Activated B cell treated with CpG ODN at 0.5 μM for 24 hours (primary cell): ENCODE measurements at regions of chr1 and their contacts with region 1.

Region 1: GRCh38 chr1:226736908-226737818 is 1.9 kb downstream of the ITPKB start:
- DNase-seq: peak; percentile 51
- ATAC-seq: peak; percentile 44
- H3K4me3 Mint-ChIP-seq: peak overlapping the region; percentile 93
- H3K27ac Mint-ChIP-seq: peak overlapping the region; percentile 86
- H3K4me1 Mint-ChIP-seq: peaks cover 68% of the 10 kb centered on the region
- H3K27me3 Mint-ChIP-seq: no peaks in the 10 kb centered on the region
- CTCF ChIP-seq: no peak

Region 2: DNA sequence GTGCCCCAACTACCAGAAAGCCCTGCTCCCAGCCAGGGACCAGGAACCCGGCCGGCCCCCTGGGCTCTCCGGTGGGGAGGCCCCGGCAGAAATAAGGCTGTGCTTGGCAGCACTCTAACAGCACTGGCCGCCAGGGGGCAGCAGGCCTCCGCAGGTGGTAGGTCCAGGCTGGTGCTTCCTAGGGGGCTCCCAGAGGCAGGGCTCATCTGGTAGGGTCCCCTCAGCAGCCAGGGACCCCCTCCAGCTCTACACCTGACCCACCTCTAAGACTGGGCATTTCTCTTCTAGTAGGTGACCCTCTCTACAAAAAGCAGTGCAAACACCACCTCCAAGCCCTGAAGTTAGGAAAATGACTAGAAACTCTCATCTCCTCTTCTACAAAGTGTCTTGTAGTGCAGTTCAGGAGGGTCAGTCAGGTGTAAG is 103.0 kb before region 1 on chr1:
- CTCF ChIA-PET with region 1: interaction called, 3 read pairs
- POLR2A ChIA-PET with region 1: interaction called, 10 read pairs
- intact Hi-C with region 1: loop called (anchors 1 kb)
- DNase-seq: peak; percentile 81
- ATAC-seq: peak; percentile 72
- H3K4me3 Mint-ChIP-seq: no peak overlapping the region
- H3K27ac Mint-ChIP-seq: peak overlapping the region; percentile 60
- H3K4me1 Mint-ChIP-seq: peaks cover 72% of the 10 kb centered on the region
- H3K27me3 Mint-ChIP-seq: no peaks in the 10 kb centered on the region
- CTCF ChIP-seq: peak; percentile 56

Region 3: GRCh38 chr1:226662642-226663326 is 74.4 kb before region 1 on chr1:
- CTCF ChIA-PET with region 1: interaction called, 3 read pairs
- POLR2A ChIA-PET with region 1: interaction called, 95 read pairs
- intact Hi-C with region 1: loop called (anchors 1 kb)
- DNase-seq: peak; percentile 73
- ATAC-seq: peak; percentile 84
- H3K4me3 Mint-ChIP-seq: peak overlapping the region; percentile 56
- H3K27ac Mint-ChIP-seq: peak overlapping the region; percentile 92
- H3K4me1 Mint-ChIP-seq: peaks cover 89% of the 10 kb centered on the region
- H3K27me3 Mint-ChIP-seq: no peaks in the 10 kb centered on the region
- CTCF ChIP-seq: no peak

Region 4: DNA sequence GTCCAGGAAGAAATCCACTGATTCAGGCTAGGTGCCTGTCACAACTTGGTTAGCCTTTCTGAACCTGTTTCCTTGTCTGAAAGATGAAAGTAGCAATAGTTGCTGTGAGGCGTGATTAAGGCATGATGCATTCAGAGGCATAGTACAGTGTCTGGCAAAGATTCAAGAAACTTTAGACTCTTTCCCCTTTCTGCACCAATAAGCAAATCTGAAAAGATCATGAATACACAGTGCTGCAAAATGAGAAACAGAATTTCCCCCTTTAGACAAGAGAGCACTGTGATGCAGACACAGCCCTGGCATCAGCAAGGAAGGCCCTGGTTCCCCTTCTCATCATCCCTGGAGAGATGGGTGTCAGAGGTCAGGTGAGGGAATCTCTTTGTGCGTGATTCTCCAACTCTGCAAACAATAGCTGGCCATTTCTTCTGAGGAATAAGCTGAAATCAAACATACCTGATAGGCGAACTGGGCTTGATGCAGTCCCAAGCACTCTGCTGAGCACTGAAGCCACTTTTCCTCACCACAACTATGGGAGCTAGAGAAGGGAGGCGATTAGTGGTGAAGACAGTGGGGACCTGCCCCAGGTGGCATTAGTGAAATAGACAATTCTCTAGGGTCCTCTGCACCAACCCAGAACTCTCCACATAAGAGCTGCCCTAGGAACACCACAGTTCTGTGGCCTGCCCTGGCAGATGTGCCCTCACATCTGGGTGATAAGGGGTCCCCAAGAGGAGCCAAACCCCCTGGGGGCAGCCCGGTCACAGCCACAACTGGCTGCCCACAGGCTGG is 39.8 kb before region 1 on chr1:
- CTCF ChIA-PET with region 1: interaction called, 3 read pairs
- POLR2A ChIA-PET with region 1: interaction called, 45 read pairs
- intact Hi-C with region 1: loop called (anchors 1 kb)
- DNase-seq: peak; percentile 54
- ATAC-seq: peak; percentile 82
- H3K4me3 Mint-ChIP-seq: peak overlapping the region; percentile 77
- H3K27ac Mint-ChIP-seq: peak overlapping the region; percentile 96
- H3K4me1 Mint-ChIP-seq: peaks cover 94% of the 10 kb centered on the region
- H3K27me3 Mint-ChIP-seq: no peaks in the 10 kb centered on the region
- CTCF ChIP-seq: no peak

Region 5: DNA sequence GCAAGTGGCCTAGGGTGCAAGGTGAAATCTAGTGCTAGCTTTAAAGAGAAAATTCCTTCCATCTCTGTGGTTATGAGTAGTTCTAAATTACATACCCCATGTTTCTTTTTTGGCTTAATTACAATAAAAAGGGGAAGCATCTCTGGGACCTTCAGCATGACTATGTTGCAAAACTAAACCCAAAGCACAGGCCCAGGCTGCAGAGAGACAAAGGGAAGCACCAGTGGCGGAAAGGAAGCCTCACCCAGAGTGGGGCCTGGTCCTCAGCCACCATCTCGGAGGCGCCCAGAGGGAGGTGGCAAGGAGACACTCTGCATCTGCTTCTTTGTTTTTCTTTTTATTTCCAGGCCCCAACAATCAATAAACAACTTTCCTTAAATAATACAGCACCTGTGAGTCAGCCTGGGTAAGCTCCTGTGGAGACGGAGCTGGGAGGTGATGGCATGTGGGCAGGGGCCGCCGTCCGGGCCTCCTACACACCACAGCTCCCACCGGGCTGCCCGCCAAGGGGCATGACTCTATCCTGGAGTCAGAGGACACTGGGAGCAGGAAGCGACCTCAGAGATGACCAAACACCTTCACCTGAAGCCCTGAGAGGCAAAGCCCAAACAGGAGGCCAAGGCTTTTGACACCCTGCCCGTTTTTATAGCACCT is 19.8 kb before region 1 on chr1:
- CTCF ChIA-PET with region 1: interaction called, 3 read pairs
- POLR2A ChIA-PET with region 1: interaction called, 6 read pairs
- intact Hi-C with region 1: loop called (anchors 1 kb)
- DNase-seq: no peak
- ATAC-seq: peak; percentile 68
- H3K4me3 Mint-ChIP-seq: peak overlapping the region; percentile 17
- H3K27ac Mint-ChIP-seq: peak overlapping the region; percentile 79
- H3K4me1 Mint-ChIP-seq: peaks cover 71% of the 10 kb centered on the region
- H3K27me3 Mint-ChIP-seq: no peaks in the 10 kb centered on the region
- CTCF ChIP-seq: no peak

Region 6: GRCh38 chr1:226827968-226828513 is 90.9 kb after region 1 on chr1:
- CTCF ChIA-PET with region 1: interaction called, 3 read pairs
- POLR2A ChIA-PET with region 1: interaction called, 6 read pairs
- intact Hi-C with region 1: loop called (anchors 1 kb)
- DNase-seq: peak; percentile 82
- ATAC-seq: peak; percentile 97
- H3K4me3 Mint-ChIP-seq: peak overlapping the region; percentile 58
- H3K27ac Mint-ChIP-seq: peak overlapping the region; percentile 80
- H3K4me1 Mint-ChIP-seq: peaks cover 37% of the 10 kb centered on the region
- H3K27me3 Mint-ChIP-seq: no peaks in the 10 kb centered on the region
- CTCF ChIP-seq: peak; percentile 67

Region 7: GRCh38 chr1:227604446-227604845 is 867.3 kb after region 1 on chr1:
- CTCF ChIA-PET with region 1: no interaction called
- POLR2A ChIA-PET with region 1: no interaction called
- intact Hi-C with region 1: no loop called
- DNase-seq: no peak
- ATAC-seq: no peak
- H3K4me3 Mint-ChIP-seq: no peak overlapping the region
- H3K27ac Mint-ChIP-seq: no peak overlapping the region
- H3K4me1 Mint-ChIP-seq: peaks cover 7% of the 10 kb centered on the region
- H3K27me3 Mint-ChIP-seq: no peaks in the 10 kb centered on the region
- CTCF ChIP-seq: no peak